Activated B cell treated with CpG ODN at 0.5 μM for 24 hours (primary cell): ENCODE measurements at regions of chr17 and their contacts with region 1.

Region 1: DNA sequence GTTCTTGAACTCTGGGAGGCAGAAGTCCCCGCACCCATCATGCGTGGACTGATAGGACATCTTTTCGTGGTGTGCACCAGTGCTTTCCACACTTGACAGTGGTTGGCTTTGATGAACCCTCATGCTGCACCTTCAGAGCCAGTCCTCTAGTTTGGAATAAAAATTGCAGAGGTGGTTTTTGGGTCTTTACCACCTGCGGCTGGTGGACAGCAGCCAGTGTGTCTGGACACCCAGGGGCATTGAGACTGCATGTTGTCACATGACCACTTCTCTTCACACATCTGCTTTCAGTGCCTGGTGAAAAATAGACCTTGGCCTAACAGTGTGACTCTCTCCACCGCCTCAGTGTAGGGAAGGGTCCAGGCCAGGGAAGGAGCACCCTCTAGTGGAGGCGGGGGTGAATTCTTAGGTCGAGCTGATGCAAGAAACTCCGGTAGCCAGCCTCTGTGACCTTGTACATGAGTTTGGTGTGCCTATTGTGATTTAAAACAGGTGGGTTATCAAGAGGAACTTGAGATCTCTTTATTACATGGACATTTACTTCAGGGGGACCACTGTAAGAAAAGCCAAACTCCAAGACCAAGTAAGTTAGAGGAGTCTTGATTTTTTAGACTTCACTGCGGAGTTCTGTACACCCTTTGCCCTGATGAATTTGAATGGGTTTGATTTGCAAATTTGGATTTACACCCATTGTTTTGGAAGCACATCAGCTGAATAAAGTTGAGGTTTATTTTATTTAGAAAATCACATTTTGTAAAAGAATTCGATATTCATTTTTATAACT is 17.9 kb downstream of the GOSR2 start:
- DNase-seq: peak; percentile 49
- ATAC-seq: peak; percentile 94
- H3K4me3 Mint-ChIP-seq: no peak overlapping the region
- H3K27ac Mint-ChIP-seq: peak overlapping the region; percentile 77
- H3K4me1 Mint-ChIP-seq: peaks cover 22% of the 10 kb centered on the region
- H3K27me3 Mint-ChIP-seq: no peaks in the 10 kb centered on the region
- CTCF ChIP-seq: no peak

Region 2: GRCh38 chr17:46832945-46833839 is 107.6 kb before region 1 on chr17:
- CTCF ChIA-PET with region 1: no interaction called
- POLR2A ChIA-PET with region 1: no interaction called
- intact Hi-C with region 1: loop called (anchors 2 kb)
- DNase-seq: no peak
- ATAC-seq: no peak
- H3K4me3 Mint-ChIP-seq: no peak overlapping the region
- H3K27ac Mint-ChIP-seq: no peak overlapping the region
- H3K4me1 Mint-ChIP-seq: peaks cover 3% of the 10 kb centered on the region
- H3K27me3 Mint-ChIP-seq: peaks cover 15% of the 10 kb centered on the region
- CTCF ChIP-seq: no peak

Region 3: DNA sequence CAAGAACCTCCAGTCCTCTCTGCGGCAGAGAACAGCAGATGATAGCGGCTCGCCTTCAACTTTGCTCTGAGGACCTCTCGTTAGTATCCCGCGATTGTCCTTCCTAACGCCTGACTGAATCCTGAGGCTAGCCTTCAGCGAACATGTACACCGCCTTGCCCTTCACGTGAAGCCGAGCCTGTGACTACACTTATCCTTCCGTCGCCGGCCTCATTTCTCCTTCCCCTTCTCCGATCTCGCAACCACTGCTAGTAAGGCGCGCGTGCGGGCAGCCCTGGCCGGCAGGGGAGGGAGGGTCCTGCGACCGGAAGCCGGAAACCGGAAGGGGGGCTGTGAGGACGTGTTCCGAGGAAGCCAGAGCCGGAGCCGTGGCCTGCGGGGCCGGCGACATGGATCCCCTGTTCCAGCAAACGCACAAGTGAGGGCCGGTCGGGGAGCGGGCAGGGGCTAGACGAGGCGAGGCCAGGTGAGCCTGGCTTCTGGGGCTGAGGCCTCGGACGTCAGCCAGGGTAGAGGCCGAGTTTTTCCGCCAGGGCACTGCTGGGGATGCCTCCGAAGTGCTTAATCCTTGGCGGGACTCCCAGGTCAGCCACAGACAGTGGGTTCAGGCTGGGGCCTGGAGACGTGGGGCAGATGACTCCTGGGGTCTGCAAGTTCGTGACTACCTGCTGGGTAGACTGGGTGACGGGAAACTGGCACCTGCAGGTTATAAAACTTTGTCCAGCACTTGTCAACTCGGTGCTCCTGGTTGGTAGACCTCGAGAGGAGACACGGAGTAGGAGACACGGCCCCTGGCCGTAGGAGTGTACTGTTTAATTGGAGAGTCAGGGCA is 17.8 kb before region 1 on chr17 and contains the start of gene GOSR2:
- CTCF ChIA-PET with region 1: no interaction called
- POLR2A ChIA-PET with region 1: no interaction called
- intact Hi-C with region 1: loop called (anchors 2 kb)
- DNase-seq: peak; percentile 93
- ATAC-seq: peak; percentile 95
- H3K4me3 Mint-ChIP-seq: peak within 1 kb of the TSS; percentile 91
- H3K27ac Mint-ChIP-seq: peak within 1 kb of the TSS; percentile 100
- H3K4me1 Mint-ChIP-seq: peaks cover 49% of the 10 kb centered on the region
- H3K27me3 Mint-ChIP-seq: peaks cover 2% of the 10 kb centered on the region
- CTCF ChIP-seq: no peak
- total RNA-seq, gene GOSR2: 64.7 and 78.0 TPM in 2 replicates

Region 4: DNA sequence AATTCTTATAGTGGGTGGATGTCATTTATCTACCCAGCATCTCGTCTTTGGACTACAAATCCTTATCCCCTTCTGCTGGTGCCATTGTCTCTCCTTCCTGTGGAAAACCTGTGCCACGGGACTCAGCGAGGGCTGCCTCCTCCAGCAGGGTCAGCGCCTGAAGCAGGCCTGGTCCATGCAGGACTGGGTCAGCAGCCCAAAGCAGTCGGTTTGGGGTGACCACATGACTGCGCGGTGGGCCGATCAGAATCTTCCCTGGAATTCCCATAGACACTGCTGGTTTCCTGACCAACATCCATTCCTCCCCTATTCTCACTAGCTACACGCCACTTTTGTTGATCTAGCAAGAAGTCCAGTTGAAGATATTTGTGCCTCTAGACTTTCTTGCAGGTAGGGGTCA is 11.3 kb after region 1 on chr17:
- CTCF ChIA-PET with region 1: interaction called, 10 read pairs
- POLR2A ChIA-PET with region 1: no interaction called
- intact Hi-C with region 1: no loop called
- DNase-seq: no peak
- ATAC-seq: no peak
- H3K4me3 Mint-ChIP-seq: no peak overlapping the region
- H3K27ac Mint-ChIP-seq: no peak overlapping the region
- H3K4me1 Mint-ChIP-seq: no peaks in the 10 kb centered on the region
- H3K27me3 Mint-ChIP-seq: no peaks in the 10 kb centered on the region
- CTCF ChIP-seq: no peak

Region 5: GRCh38 chr17:46995841-46996571 is 55.2 kb after region 1 on chr17:
- CTCF ChIA-PET with region 1: interaction called, 4 read pairs
- POLR2A ChIA-PET with region 1: no interaction called
- intact Hi-C with region 1: loop called (anchors 1 kb)
- DNase-seq: no peak
- ATAC-seq: no peak
- H3K4me3 Mint-ChIP-seq: no peak overlapping the region
- H3K27ac Mint-ChIP-seq: no peak overlapping the region
- H3K4me1 Mint-ChIP-seq: peaks cover 34% of the 10 kb centered on the region
- H3K27me3 Mint-ChIP-seq: no peaks in the 10 kb centered on the region
- CTCF ChIP-seq: no peak

Region 6: DNA sequence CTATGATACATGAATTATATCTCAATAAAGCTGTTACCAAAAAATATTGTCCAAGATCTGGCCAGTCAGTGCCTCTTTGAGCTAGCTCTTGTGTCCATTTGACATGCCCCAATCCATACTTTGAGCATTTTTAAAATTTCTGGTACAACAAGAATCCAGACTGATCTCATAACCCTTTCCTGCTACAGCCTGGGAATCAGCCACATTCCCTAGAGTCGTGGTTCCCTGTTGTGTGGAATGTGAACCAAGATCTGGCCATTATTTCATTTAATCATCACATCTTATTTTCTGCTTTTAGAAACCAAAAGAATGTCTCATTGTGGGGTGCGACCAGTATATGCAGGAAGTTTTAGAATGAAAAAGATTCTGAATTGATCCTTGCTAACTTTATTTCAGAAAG is 72.5 kb after region 1 on chr17:
- CTCF ChIA-PET with region 1: no interaction called
- POLR2A ChIA-PET with region 1: no interaction called
- intact Hi-C with region 1: no loop called
- DNase-seq: no peak
- ATAC-seq: no peak
- H3K4me3 Mint-ChIP-seq: no peak overlapping the region
- H3K27ac Mint-ChIP-seq: no peak overlapping the region
- H3K4me1 Mint-ChIP-seq: peaks cover 10% of the 10 kb centered on the region
- H3K27me3 Mint-ChIP-seq: no peaks in the 10 kb centered on the region
- CTCF ChIP-seq: no peak

Region 7: DNA sequence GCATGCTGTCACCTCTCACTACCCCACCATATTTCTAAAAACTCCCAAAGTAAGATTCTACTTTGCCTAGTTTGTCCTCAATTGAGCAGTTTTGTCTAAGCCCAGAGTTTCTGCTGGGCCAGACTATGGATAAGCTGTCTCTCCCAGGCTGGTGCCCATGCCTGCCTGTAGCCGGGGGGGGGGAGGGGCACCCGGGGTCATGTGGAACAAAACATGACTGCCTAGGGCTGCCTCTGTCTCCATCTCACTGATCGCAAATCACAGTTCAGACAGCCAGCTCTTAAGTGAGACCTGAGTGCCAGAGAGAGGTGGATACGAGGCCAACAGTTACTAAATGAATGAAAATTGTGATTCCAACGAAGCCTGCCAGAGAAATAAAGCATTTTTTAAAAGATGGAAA is 117.0 kb after region 1 on chr17:
- CTCF ChIA-PET with region 1: no interaction called
- POLR2A ChIA-PET with region 1: no interaction called
- intact Hi-C with region 1: no loop called
- DNase-seq: no peak
- ATAC-seq: no peak
- H3K4me3 Mint-ChIP-seq: no peak overlapping the region
- H3K27ac Mint-ChIP-seq: no peak overlapping the region
- H3K4me1 Mint-ChIP-seq: no peaks in the 10 kb centered on the region
- H3K27me3 Mint-ChIP-seq: no peaks in the 10 kb centered on the region
- CTCF ChIP-seq: no peak

Region 8: GRCh38 chr17:47615766-47616424 is 675.1 kb after region 1 on chr17:
- CTCF ChIA-PET with region 1: interaction called, 4 read pairs
- POLR2A ChIA-PET with region 1: no interaction called
- intact Hi-C with region 1: loop called (anchors 2 kb)
- DNase-seq: no peak
- ATAC-seq: peak; percentile 47
- H3K4me3 Mint-ChIP-seq: no peak overlapping the region
- H3K27ac Mint-ChIP-seq: no peak overlapping the region
- H3K4me1 Mint-ChIP-seq: no peaks in the 10 kb centered on the region
- H3K27me3 Mint-ChIP-seq: no peaks in the 10 kb centered on the region
- CTCF ChIP-seq: peak; percentile 60